ENCODE measurements at regions of chr11 and their contacts with region 1.

Region 1: GRCh38 chr11:74449369-74449931 is 17.9 kb downstream of the KCNE3 start:
- DNase-seq: no peak
- ATAC-seq: peak; percentile 92

Region 2: GRCh38 chr11:73965076-73965860 is 484.2 kb before region 1 on chr11:
- intact Hi-C with region 1: loop called (anchors 10 kb)
- DNase-seq: peak; percentile 29
- ATAC-seq: peak; percentile 22

Region 3: DNA sequence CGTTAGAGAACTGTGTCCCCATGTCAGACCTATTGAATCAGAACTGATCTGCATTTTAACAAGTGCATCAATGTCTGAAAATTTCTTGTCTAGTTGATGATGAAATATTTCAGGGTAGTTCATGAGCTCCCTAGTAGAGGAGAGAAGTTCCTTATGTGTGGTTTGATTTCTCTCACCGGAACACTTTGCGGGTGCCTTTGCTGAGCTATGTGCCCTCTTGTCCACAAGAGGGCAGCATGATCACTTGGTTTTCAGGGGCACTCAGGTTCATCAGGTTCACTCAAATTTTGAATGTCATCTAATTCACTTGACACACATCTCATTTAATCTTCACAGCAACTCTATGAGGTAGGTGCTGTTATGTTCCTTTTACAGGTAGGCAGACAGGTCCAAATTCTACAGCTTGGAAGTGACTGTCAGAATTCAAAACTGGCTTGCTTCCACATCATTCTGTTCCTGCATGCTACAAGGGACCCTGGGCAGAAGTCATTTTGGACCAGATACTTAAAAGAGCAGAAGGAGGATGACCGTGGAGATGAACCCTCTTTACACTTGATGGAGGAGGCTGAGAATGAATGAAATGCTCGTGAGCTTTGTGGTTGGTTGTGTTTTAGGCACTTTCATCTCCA is 193.6 kb before region 1 on chr11:
- intact Hi-C with region 1: loop called (anchors 5 kb)
- DNase-seq: no peak
- ATAC-seq: peak; percentile 75

Region 4: DNA sequence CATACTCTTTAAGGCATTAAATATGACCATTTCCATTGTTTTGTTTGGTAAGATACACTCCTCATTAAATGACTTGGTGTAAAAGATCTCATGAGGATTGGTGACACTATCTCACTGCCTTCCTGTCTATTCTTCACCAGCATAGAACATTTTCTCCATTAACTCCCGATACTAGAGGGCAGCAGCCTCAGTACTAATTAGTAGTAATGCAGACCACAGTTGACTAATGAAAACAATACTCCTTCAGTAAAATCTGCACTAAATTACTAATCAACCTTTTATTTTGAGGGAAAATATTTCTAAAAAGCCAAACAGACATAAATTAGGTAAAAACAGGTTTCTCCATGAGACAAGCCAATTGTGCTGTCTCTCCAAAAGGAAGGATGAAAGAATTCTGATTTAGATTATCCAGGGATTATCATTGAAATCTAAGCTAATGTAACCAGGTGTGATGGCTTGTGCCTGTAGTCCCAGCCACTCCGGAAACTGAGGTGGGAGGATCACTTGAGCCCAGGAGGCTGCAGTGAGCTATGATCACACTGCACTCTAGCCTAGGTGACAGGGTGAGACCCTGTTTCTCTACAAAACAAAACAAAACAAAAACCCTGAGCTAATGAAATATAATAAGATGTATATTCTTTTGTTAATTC is 60.6 kb before region 1 on chr11:
- intact Hi-C with region 1: loop called (anchors 5 kb)
- DNase-seq: no peak
- ATAC-seq: peak; percentile 78

Region 5: GRCh38 chr11:74416985-74417804 is 32.3 kb before region 1 on chr11:
- intact Hi-C with region 1: no loop called
- DNase-seq: no peak
- ATAC-seq: no peak

Region 6: GRCh38 chr11:74570266-74571061 is 121.0 kb after region 1 on chr11:
- intact Hi-C with region 1: loop called (anchors 2 kb)
- DNase-seq: no peak
- ATAC-seq: peak; percentile 80

Region 7: GRCh38 chr11:74710281-74710938 is 261.0 kb after region 1 on chr11:
- intact Hi-C with region 1: no loop called
- DNase-seq: peak; percentile 56
- ATAC-seq: peak; percentile 69